Activated CD4-positive, alpha-beta T cell treated with anti-CD3 and anti-CD28 coated beads, Interleukin-2, amount 10 ng/mL, durations not matched to agents 7 days and 5 days (primary cell): ENCODE measurements at regions of chr17 and their contacts with region 1.

Region 1: DNA sequence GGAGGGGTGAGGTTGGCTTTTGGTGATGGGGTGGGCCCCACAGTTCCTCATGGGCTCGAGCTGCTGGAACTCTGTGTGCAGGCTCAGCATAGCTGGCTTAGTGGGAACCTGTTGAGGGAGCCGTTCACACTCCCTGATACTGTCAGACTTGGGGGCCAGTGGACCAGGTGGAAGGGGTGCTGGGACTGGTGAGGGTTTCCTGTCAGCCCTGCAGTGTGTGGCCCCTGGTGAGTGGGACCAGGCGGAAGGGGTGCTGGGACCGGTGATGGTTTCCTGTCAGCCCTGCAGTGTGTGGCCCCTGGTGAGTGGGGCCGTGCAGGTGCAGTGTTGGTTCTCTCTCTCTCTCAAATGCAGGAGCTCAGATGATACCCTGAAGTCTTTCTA is 45.1 kb upstream of the ZNF750 start:
- DNase-seq: peak; percentile 43
- H3K4me3 Mint-ChIP-seq: peak overlapping the region; percentile 54
- H3K27ac Mint-ChIP-seq: peak overlapping the region; percentile 96
- H3K4me1 Mint-ChIP-seq: peaks cover 81% of the 10 kb centered on the region
- H3K27me3 Mint-ChIP-seq: no peaks in the 10 kb centered on the region

Region 2: DNA sequence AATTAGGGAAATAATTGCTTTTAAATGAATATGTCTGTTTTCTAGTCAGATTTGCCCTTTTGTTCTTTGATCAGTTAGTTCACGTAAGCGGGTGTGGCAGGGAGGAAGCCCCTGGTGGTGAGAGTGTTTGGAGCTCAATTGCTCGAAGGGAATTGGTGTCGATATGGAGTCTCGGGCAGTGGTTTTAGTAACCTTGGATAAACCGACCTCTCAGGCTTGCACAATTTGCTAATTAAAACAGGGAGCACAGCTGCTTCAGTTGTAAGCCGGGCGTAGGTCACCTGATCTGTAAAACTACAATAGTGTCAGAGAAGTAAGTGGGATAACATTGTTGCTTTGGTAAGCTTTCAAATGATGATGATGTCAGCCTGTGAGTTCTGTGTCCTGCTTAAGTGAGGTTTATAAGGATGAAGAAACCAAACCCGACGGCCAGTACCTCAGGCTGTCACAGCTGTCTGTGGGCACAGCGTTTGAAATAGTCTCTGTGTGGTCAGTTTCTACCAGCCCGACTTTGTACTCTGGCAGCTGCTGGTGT is 48.1 kb before region 1 on chr17:
- CTCF ChIA-PET with region 1: no interaction called
- POLR2A ChIA-PET with region 1: no interaction called
- DNase-seq: no peak
- H3K4me3 Mint-ChIP-seq: no peak overlapping the region
- H3K27ac Mint-ChIP-seq: no peak overlapping the region
- H3K4me1 Mint-ChIP-seq: peaks cover 2% of the 10 kb centered on the region
- H3K27me3 Mint-ChIP-seq: no peaks in the 10 kb centered on the region

Region 3: DNA sequence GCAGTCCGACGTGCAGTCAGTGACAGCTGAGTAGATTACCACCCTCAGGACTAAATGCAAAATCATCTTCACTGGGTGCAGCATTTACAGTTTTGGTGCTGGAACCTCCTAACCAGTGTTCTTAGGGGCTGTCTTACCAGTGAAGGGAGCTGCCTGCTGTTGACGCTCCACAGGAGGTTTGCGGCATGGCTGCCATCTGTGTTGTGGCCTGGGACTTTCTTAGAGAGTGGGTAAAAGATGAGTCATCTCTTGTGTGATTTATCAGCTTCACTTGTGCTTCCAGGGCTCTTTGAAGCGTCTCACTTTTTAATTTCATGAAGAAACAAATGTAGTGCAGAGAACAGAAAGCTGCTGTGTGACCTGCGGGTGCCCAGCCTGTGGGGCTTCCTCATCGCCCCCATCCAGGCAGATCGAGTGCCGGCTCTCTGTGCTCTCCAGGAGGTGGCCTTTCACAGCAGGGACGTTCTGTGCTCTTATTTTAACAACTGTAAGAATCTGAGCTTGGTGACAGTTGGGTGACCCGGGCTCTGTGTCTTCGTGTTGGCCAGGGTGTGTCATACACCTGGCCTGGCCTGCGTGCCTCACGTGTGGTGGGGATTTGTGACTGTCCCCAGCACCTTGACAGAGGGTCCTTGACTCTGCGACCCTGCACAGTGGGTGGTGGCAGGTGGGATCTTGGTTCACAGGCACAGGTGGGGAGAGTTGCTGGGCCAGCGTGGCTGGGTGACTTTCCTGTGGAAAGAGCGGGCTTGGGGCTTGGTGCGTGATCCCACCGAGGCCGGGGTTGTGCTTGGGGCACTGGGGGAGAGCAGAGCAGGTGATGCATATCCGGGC is 20.8 kb before region 1 on chr17:
- CTCF ChIA-PET with region 1: interaction called, 10 read pairs
- POLR2A ChIA-PET with region 1: interaction called, 3 read pairs
- DNase-seq: peak; percentile 95
- H3K4me3 Mint-ChIP-seq: peak overlapping the region; percentile 77
- H3K27ac Mint-ChIP-seq: peak overlapping the region; percentile 99
- H3K4me1 Mint-ChIP-seq: peaks cover 80% of the 10 kb centered on the region
- H3K27me3 Mint-ChIP-seq: no peaks in the 10 kb centered on the region

Region 4: DNA sequence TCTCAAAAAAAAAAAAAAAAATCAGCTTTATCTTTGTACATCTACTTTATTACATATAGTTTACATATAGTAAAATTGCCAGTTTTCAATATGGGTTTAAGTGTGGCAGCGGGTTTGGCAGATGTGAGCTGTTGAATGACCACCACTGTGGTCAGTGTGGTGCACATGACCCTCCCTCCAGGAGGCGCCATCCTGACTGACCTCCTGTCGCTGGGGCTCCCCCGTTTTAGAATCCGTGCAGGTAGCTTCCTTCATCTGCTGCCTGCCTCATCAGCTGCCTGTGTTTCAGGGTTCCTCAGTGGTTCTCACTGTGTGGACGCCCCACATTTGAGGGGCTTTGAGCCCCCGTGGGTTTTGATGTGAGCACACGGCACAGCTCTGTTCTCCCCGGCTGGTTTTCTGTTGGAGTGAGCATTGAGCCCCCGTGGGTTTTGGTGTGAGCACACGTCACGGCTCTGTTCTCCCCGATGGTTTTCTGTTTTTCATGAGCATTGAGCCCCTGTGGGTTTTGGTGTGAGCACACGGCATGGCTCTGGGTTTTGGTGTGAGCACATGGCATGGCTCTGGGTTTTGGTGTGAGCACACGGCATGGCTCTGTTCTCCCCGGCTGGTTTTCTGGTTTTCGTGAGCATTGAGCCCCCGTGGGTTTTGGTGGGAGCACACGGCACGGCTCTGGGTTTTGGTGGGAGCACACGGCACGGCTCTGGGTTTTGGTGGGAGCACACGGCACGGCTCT is 12.7 kb after region 1 on chr17:
- CTCF ChIA-PET with region 1: interaction called, 10 read pairs
- POLR2A ChIA-PET with region 1: interaction called, 4 read pairs
- DNase-seq: no peak
- H3K4me3 Mint-ChIP-seq: no peak overlapping the region
- H3K27ac Mint-ChIP-seq: no peak overlapping the region
- H3K4me1 Mint-ChIP-seq: peaks cover 39% of the 10 kb centered on the region
- H3K27me3 Mint-ChIP-seq: no peaks in the 10 kb centered on the region

Region 5: DNA sequence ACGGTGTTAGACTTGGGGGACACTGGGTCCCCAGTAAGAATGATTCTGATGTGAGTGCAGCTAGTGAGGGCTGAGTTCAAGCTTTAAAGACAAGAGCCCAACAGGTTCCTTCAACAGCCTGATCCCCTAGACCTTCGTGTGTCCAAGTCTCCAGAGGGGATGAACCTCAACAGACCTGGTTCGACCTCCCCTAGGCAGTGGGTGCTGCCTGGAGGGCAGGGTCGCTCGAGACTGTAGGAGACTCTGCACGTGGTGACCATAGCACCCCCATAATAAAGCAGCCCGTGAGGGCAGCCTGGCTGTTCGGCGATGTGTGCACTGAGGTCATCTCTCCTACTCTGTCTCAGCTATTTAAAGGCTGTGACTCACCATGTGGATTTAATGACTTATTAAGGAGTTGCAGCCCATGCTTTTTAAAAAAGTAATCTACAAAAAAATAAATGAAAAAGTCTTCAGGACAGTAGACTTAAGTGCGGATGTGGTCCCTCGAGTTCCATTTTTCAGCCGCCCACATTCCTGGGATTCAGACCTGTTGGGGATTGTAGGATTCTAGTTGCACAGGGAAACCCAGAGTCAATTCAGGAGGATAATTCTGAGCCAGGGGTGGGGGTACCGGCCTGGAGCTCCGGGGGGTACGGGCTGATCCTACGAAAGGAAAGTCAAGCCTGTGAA is 171.1 kb after region 1 on chr17:
- CTCF ChIA-PET with region 1: no interaction called
- POLR2A ChIA-PET with region 1: no interaction called
- DNase-seq: peak; percentile 4
- H3K4me3 Mint-ChIP-seq: no peak overlapping the region
- H3K27ac Mint-ChIP-seq: no peak overlapping the region
- H3K4me1 Mint-ChIP-seq: peaks cover 20% of the 10 kb centered on the region
- H3K27me3 Mint-ChIP-seq: no peaks in the 10 kb centered on the region